ENCODE measurements at regions of chr7 and their contacts with region 1.

Region 1: DNA sequence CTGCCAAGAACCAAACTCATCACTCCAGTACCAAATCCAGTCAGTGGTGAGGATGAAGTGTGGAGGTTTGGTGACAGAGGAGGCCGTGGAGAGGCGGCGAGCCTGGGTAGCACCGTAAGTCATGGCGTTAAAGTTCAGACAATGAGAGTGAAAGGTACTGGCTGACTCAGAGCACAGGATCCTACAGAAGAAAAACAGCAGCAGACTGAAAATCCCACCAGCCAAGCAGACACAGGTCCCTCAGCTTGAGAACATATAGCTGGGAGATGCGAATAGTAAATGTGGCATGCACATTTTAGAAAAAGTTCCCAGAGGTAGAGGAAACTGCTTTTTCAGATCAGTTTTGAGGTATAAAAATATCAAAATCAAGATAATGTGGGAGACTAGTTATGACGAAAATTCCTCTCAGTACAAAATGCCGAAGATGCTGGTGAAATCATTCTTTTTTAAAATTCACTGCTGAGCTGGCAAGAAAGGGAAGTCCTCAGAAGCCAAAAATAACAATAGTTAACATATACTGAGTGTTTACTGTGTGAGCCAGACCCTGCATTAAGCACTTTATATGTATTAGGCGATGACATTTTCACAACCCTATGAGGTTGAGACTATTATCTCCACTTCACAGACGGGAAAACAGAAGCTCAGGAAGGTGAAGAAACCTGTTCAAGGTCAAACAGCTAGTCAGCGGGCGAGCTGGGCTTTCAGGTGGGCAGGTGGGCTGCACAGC is 20.9 kb downstream of the PARP12 start:
- DNase-seq: no peak
- H3K4me3 ChIP-seq: no peak overlapping the region
- H3K27ac ChIP-seq: no peak overlapping the region
- H3K4me1 ChIP-seq: no peaks in the 10 kb centered on the region
- H3K27me3 ChIP-seq: no peaks in the 10 kb centered on the region
- CTCF ChIP-seq: no peak
- EP300 ChIP-seq: no peak
- POLR2A ChIP-seq: no peak

Region 2: DNA sequence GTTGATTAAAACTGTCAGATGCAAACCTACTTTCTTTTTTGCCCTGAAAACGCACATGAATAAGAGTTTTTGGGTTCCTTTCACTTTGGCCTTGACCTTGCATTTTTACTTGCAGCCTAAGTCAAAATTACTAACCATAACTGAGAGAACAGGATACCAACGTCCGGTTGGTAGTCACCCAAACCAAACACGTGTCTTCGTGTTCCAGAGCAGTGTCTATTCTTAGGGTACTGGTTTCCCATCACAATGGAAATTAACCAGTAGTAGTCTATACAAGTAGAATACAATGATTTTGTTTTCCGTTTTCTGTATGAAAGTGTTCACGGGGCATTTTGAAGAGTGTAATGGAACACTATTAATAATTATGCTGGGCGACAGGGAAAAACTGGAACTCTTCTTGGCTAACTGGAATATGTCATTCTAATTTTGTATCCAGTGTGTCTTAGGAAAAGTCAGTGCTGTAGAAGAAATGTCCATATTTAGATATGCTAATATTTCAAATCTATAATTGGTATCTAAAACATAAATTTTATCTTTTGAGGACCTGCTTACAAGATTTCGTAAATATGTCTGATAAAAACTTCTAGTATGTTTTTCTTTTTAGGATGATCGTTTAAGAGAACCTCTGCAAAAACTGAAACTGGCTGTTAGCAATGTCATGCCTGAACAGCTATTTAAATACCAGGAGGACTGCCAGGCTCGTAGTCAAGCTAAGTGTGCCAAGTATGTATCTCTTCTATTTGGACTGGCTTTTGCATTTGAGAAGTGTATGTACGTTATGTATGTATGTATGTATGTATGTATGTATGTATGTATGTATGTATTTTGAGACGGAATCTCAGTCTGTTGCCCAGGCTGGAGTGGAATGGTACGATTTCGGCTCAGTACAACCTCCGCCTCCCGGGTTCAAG is 769.8 kb before region 1 on chr7:
- intact Hi-C with region 1: no loop called
- DNase-seq: no peak
- H3K4me3 ChIP-seq: no peak overlapping the region
- H3K27ac ChIP-seq: no peak overlapping the region
- H3K4me1 ChIP-seq: no peaks in the 10 kb centered on the region
- H3K27me3 ChIP-seq: no peaks in the 10 kb centered on the region
- CTCF ChIP-seq: no peak
- EP300 ChIP-seq: no peak
- POLR2A ChIP-seq: no peak

Region 3: DNA sequence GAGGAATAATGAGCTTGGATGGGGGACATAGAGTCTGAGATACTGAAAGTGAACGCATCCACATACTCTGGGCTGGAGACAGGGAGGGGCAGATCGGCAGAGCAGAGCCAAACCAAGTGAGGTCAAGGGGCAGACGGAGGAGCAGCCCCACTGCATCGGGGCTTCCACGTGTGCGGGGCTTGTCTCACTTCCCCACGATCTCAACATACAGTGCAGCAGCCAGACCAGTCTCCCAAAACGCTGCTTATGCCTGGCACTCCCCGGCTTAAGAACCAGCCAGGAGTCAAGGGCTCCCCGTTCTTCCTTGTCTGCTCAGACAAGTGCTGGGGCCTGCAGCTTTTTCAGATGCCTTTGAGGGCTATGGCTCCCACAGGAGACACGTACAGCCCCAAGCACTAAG is 22.6 kb before region 1 on chr7:
- intact Hi-C with region 1: loop called in 1 of 4 experiments (anchors 1 kb)
- DNase-seq: no peak
- H3K4me3 ChIP-seq: no peak overlapping the region
- H3K27ac ChIP-seq: no peak overlapping the region
- H3K4me1 ChIP-seq: peaks cover 1% of the 10 kb centered on the region
- H3K27me3 ChIP-seq: no peaks in the 10 kb centered on the region
- CTCF ChIP-seq: no peak
- EP300 ChIP-seq: no peak
- POLR2A ChIP-seq: no peak

Region 4: DNA sequence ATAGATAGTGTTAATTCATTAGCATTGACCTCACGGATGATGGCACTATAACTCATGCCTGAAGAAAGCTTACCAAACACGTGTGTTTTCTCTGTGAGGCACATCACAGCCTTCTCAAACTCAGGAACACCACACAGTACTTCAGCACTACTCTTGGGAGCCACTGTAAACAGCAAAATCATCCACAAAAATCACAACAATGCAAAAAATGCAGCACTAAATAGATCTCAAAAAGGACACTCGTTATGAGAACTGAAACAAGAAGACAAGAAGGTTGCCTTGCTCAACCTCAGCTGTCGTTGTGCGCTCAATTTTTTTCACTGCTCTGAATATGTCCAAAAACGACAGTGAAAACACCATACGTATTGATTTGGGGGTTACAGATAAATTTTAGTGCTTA is 33.0 kb after region 1 on chr7:
- intact Hi-C with region 1: loop called in 1 of 4 experiments (anchors 1 kb)
- DNase-seq: no peak
- H3K4me3 ChIP-seq: no peak overlapping the region
- H3K27ac ChIP-seq: no peak overlapping the region
- H3K4me1 ChIP-seq: peaks cover 1% of the 10 kb centered on the region
- H3K27me3 ChIP-seq: no peaks in the 10 kb centered on the region
- CTCF ChIP-seq: no peak
- EP300 ChIP-seq: no peak
- POLR2A ChIP-seq: no peak

Measured in ovary (tissue), 10 donors.